Right ventricle myocardium inferior (tissue), 1 donor: ENCODE measurements at regions of chr12 and their contacts with region 1.

Region 1: DNA sequence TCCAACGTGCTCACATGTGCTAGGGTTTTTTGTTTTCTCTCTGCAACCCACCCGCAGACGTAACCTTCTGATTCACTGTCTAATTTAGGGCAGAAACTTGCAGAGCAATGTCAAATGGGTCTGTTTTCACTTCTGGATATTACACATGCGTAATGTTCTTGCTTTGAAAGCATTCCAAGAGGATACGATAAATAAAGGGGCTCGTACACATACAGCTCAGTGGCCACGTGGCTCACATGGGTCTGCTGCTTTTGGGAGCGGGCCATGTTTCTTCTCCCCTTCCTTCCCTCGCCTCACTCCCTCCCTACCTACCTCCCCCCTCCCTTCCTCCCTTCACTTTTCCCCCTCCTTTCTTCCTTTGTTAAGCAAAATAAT is 23.4 kb downstream of the CACNA1C start:
- DNase-seq: no peak
- ATAC-seq: peak; percentile 42

Region 2: GRCh38 chr12:2023365-2023764 is 52.8 kb before region 1 on chr12:
- intact Hi-C with region 1: no loop called
- DNase-seq: no peak
- ATAC-seq: no peak

Region 3: DNA sequence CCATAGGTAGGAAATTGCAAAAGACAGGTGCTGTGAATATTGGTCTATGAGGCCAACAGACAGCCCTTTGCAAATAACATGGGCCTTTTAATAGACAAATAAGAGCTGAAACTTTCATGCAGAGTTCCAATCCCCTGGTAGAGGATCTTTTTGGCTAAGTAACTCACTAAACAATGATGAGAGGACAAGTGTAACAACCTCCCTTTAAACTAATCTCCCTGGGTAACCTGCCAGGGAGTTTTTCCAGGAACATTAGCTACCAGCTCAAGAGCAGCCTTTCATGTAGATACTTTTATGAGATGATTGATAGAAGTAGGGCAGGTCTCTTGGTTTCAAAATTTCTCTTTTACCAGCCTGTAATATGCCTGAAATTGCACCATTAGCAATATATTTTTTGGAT is 37.1 kb before region 1 on chr12:
- intact Hi-C with region 1: no loop called
- DNase-seq: no peak
- ATAC-seq: peak; percentile 56

Region 4: DNA sequence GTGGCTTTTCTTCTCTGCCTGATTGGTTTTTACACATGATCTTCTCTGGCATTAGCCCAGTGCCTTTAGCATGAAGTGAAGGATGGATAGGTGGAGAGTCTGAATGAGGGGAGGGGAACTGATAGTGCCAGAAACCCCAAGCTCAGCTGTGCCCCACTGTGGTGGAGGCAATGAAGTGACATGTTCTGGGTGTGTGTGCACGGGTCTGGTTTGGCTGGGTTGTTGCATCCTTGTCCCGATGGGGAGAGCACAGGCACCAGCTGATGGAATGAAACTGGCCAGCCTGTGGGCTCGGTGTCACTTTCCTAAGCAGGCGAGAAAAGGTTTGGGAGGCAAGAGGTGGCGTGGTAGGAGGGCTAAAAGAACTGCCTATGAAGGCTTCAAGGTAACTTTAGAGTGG is 41.9 kb after region 1 on chr12:
- intact Hi-C with region 1: loop called (anchors 5 kb)
- DNase-seq: no peak
- ATAC-seq: peak; percentile 27

Region 5: GRCh38 chr12:2179953-2180736 is 104.0 kb after region 1 on chr12:
- intact Hi-C with region 1: loop called (anchors 5 kb)
- DNase-seq: peak; percentile 77
- ATAC-seq: peak; percentile 87